A549 (cell line): ENCODE measurements at regions of chr11 and their contacts with region 1.

Region 1: DNA sequence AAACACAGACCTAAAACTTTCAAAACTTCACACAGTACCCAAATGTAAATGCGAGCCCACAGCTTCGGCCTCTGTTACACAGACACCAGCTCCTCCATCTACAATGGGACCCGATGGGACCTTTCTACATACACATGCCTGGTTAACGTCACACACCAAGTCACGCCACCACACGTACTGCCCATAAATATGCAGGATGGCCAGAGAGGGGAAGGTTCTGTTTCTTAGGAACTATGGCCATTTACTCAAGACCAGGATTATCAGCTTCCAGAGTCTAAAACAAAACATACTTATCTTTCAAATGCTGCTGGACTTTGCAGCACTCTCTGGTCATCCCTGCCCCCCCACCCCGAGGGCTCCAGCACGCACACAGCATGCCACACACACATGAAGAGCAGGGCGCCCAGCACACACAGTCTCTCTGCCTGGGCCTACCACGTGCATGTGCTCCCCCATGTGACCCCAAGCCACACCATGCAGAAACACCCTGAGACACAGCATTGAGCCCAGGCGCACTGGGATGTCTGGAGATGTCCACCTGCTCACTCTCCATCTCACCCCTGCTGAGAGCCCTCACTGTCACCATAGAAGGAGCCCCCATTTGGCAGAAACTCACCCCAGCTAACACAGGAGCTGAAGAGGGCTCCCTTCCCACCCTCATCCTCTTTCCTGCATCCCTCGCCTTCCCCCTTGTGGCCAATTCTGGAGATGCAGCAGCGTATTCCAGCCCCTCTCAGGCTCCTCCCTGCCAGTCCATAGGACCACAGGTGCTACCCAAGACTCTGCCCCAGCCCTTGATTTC is 61.8 kb downstream of the SLC22A12 start:
- DNase-seq: peak; percentile 71 to 92
- ATAC-seq: peak; percentile 71 to 90
- H3K4me3 ChIP-seq: no peak overlapping the region
- H3K27ac ChIP-seq: no peak overlapping the region
- H3K4me1 ChIP-seq: peaks cover 13% of the 10 kb centered on the region; the same call in 2 of the 3 replicates
- CTCF ChIP-seq: peak; percentile 89
- EP300 ChIP-seq: no peak
- POLR2A ChIP-seq: no peak
- RAD21 ChIP-seq: peak; percentile 91 to 93

Region 2: DNA sequence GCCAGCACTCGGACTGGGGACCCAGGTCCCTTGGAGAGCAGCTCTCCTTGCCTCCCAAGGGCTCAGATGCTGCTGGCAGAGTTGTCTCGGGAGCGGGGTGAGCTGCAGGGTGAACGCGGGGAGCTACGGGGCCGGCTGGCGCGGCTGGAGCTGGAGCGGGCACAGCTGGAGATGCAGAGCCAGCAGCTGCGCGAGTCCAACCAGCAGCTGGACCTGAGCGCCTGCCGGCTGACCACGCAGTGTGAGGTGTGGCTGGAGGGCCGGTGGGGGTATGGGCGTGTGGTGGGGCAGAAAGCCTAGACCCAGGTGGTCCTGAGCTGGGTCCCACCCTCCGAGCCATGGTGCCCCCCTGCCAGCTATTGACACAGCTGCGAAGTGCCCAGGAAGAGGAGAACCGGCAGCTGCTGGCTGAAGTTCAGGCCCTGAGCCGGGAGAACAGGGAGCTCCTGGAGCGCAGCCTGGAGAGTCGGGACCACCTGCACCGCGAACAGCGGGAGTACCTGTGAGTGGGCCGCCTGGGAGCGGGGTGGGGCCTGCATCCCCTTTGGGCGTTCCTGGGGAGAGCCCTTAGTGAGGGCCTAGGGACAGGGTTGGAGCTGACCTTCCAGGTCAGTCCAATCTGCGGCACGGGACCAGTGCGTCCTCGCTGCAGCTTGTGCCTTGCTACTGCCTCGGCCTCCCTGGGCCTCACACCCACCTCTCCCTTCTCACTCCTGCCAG is 299.6 kb before region 1 on chr11:
- CTCF ChIA-PET with region 1: interaction called, 17 read pairs
- POLR2A ChIA-PET with region 1: no interaction called
- DNase-seq: no peak
- ATAC-seq: no peak
- H3K4me3 ChIP-seq: no peak overlapping the region
- H3K27ac ChIP-seq: no peak overlapping the region; a peak in 1 of 6 replicates
- H3K4me1 ChIP-seq: peaks cover 37% of the 10 kb centered on the region
- CTCF ChIP-seq: no peak
- EP300 ChIP-seq: no peak
- POLR2A ChIP-seq: no peak
- RAD21 ChIP-seq: no peak

Region 3: DNA sequence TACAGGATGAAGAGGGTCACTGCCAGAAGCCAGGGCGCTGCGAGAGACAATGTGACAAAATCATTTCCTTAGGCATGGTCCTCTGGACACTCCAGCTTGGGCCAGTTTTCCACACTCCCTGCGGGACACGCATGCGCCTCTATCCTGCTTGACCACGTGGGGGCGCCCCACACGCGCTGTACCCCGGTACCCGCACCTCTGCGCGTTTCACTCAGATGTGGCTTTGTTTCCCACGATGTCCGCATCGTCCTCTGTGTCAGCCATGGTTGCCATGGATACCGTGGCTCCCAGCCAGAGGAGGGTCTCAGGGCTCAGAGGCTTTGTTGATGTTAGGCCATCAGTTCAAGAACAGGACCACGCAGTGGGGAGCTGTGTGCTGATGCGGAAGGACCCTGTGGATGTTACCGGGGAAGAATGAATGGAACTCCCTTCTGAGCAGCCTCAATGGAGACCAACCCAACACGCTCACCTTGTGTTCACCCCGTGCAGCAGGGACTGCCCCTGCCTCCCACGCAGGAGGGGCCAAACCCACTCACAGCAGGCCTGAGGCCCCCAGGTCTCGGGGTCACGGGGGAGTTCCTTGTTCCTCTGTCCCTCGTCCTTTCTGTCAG is 162.9 kb before region 1 on chr11:
- CTCF ChIA-PET with region 1: interaction called, 48 read pairs
- POLR2A ChIA-PET with region 1: no interaction called
- DNase-seq: peak; percentile 59 to 80
- ATAC-seq: peak; percentile 92 to 98
- H3K4me3 ChIP-seq: no peak overlapping the region
- H3K27ac ChIP-seq: no peak overlapping the region
- H3K4me1 ChIP-seq: no peaks in the 10 kb centered on the region
- CTCF ChIP-seq: peak; percentile 79
- EP300 ChIP-seq: no peak
- POLR2A ChIP-seq: no peak
- RAD21 ChIP-seq: peak; percentile 81 to 82

Region 4: DNA sequence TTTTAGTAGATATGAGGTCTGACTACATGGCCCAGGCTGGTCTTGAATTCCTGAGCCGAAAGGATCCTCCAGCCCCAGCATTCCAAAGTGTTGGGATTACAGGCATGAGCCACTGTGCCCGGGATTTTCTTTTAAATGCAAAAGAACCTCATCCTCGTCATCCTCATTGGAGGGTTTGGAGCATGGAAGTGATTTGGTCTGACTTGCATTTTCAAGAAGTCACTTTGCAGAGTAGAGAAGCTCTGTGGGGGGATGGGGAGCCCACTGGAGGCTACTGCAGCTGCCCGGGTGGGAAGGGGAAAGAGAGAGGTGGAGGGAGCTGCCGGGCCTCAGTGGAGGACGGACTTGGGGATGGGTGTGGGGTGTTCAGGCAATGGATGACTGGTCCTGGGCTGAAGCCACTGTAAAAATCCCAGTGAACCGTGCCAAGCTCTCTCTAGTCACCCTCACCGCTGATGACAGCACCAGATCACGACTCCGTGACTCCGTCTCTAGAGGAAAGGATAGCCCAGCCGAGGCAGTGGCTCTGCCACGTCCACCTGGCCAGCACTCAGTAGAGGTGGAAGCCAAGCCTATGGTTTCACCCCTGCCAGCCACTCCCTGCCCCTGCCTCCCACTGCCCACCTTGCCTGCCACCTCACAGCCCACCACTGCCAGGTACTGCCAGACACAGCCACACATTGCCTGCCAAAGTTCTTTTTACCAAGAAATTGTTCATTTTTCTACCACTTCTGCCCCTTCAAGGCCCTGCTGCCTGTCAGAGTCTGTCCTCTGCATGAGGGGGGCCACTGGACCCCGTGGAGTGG is 94.5 kb before region 1 on chr11:
- CTCF ChIA-PET with region 1: interaction called, 26 read pairs
- POLR2A ChIA-PET with region 1: no interaction called
- DNase-seq: no peak
- ATAC-seq: no peak
- H3K4me3 ChIP-seq: no peak overlapping the region
- H3K27ac ChIP-seq: no peak overlapping the region
- H3K4me1 ChIP-seq: peaks cover 27% of the 10 kb centered on the region
- CTCF ChIP-seq: no peak
- EP300 ChIP-seq: no peak
- POLR2A ChIP-seq: no peak
- RAD21 ChIP-seq: no peak

Region 5: DNA sequence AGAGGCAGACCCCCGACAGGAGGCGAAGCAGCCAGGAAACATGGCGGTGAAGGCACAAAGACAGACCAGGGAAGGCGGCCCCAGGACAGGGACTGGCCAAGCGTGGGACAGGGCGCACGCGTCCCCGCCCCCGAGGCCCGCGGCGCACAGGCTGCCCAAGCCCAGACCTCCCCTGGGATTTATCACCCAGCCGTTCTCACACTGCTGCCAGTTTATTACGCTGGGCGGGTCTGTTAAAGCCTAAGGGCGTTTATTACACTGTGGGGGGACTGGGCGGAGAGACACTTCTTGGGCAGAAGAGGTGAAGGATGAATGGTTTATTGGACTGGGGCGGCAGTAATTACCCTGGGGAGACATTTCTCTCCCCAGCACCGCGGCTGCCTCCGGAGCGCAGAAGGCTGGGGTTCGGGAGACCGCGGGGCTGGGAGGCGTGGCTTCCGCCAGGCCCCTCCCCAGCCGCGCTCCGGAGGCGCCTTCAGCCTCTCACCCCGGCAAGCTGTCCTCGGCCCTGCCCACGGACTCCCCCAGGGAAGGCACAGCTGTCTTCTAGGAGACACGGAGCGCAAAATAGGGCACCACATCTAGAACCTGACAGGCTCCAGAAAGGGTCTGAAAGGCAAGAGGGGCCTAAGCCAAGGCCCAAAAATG is 14.6 kb before region 1 on chr11:
- CTCF ChIA-PET with region 1: interaction called, 80 read pairs
- POLR2A ChIA-PET with region 1: no interaction called
- DNase-seq: no peak
- ATAC-seq: no peak
- H3K4me3 ChIP-seq: no peak overlapping the region
- H3K27ac ChIP-seq: no peak overlapping the region
- H3K4me1 ChIP-seq: peaks cover 6% of the 10 kb centered on the region; the same call in 1 of the 3 replicates
- CTCF ChIP-seq: no peak
- EP300 ChIP-seq: no peak
- POLR2A ChIP-seq: no peak
- RAD21 ChIP-seq: no peak

Region 6: DNA sequence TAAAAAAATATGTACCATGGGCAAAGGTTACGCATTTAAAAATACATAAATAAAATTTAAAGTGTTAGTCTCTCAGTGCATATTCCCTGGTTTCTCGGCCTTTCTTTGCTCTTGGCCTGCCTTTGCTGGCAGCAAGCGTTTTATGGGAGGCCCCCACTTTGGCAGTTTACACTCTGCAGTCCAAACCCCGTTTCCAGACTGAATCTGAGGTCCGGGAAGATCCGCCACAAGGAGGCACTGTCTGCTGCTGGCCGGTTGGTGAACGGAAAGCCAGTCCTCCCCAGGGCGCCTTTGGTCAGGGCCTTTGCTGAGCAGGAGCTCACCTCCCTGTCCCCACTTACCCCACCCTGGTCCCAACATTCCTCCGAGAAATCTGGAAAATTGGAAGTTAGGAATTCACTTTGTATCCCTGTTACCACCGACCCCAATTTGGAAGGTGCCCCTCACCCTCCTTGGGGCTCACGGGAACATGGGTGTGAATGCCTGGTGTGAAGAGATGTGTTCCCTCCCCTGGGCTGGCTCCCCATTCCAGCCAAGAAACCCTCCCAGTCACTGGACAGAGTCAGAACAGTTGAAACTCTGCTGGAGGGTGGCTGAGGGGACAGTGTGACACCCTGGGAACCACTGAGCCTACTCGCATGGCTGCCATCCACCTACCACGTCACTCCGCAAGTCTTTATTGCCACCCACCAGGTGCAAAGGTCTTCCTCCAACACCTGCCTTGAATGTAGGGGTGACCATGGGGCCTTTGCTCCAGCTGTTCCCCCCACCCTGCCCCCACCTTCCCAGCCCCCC is 134.9 kb after region 1 on chr11:
- CTCF ChIA-PET with region 1: no interaction called
- POLR2A ChIA-PET with region 1: no interaction called
- DNase-seq: peak; percentile 72 to 89
- ATAC-seq: peak; percentile 74 to 93
- H3K4me3 ChIP-seq: no peak overlapping the region
- H3K27ac ChIP-seq: peak overlapping the region in 1 of 2 experiments; percentile 39; a peak in 1 of 6 replicates
- H3K4me1 ChIP-seq: no peaks in the 10 kb centered on the region
- CTCF ChIP-seq: peak; percentile 81
- EP300 ChIP-seq: no peak
- POLR2A ChIP-seq: no peak
- RAD21 ChIP-seq: peak; percentile 75 to 84

Region 7: DNA sequence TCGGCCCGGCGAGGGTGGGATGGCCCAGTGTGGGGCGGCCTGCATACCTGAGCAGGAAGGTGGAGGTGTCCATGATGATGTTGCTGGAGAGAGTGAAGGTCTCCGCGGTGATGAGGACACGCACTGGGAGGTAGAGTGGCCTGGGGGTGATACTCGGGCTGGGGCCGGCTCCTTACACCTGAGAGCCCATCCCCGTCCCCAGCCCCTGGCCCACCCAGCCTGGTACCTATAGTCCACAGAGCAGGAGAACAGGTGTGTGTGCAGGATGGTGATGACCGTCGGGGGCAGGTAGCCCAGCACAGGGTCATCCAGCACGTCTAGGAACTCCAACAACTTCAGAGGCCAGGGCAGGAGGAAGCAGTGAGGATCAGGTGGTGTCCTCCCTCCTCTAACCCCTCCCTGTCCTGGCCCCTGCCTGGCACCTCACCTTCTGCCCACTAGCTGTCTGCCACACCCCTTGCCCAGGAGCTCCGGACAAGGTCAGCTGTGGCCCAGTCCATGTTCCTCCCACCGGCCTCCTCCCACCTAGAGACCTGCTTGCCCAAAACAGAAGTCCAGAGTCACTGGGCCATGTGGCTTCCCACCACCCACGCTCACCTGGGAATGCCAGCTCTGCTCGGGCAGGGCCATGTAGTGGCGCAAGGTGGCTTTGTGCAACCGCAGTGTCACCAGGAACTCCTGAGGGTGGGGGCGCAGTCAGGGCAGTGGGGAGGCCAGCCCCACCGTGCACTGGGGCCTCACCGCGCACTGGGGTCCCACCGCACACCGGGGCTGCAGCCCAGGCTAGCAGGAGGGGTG is 252.9 kb after region 1 on chr11:
- CTCF ChIA-PET with region 1: no interaction called
- POLR2A ChIA-PET with region 1: no interaction called
- DNase-seq: no peak
- ATAC-seq: no peak
- H3K4me3 ChIP-seq: no peak overlapping the region
- H3K27ac ChIP-seq: no peak overlapping the region
- H3K4me1 ChIP-seq: no peaks in the 10 kb centered on the region; the same call in 2 of the 3 replicates
- CTCF ChIP-seq: no peak
- EP300 ChIP-seq: no peak
- POLR2A ChIP-seq: no peak
- RAD21 ChIP-seq: no peak

Region 8: GRCh38 chr11:64934682-64935358 is 282.0 kb after region 1 on chr11:
- CTCF ChIA-PET with region 1: no interaction called
- POLR2A ChIA-PET with region 1: no interaction called
- DNase-seq: no peak
- ATAC-seq: no peak
- H3K4me3 ChIP-seq: no peak overlapping the region
- H3K27ac ChIP-seq: no peak overlapping the region
- H3K4me1 ChIP-seq: no peaks in the 10 kb centered on the region
- CTCF ChIP-seq: no peak
- EP300 ChIP-seq: no peak
- POLR2A ChIP-seq: no peak
- RAD21 ChIP-seq: no peak